Sigmoid colon (tissue), 7 donors: ENCODE measurements at regions of chr2 and their contacts with region 1.

Region 1: GRCh38 chr2:239401067-239401880 is 454 bp upstream of the HDAC4 start:
- DNase-seq: peak; percentile 100
- H3K4me3 ChIP-seq: peak overlapping the region; percentile 56 to 80 (median 68)
- H3K27ac ChIP-seq: peak overlapping the region; percentile 97 to 100 (median 98)
- H3K4me1 ChIP-seq: peaks cover 4 to 40% (median 36%) of the 10 kb centered on the region in 4 donors
- H3K27me3 ChIP-seq: no peaks in the 10 kb centered on the region
- CTCF ChIP-seq: no peak
- EP300 ChIP-seq: peak in 2 of 4 donors; percentile 48 to 65
- POLR2A ChIP-seq: peak; percentile 90 to 93

Region 2: DNA sequence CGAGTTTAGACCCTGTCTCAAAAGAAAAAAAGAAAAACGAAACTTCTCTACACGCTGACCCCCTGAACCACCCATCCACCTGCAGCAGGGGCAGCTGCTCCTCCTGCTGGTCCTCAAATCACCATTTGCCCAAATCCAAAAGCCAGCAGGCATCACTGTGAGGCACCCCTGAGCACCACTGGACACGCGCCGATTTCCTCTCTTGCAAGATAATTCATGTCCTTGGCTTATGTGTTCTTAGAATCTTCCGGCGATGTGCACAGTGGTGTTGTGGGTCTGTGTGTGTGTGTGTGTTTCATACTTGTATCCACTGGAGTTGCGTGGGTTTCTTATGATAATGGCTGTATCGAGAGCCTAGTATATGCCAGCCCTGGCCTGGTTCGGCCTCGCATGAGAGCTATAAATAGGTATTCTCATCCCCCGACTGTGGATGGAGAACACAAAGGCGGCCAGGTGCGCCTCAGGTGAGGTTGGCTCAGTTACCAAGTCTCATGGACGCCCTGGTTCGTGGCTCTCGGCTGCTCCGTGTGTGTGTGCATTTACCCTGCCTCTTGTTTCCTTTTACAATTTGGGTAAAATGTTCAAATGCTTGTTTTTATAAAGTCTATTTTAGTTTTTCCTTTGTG is 236.0 kb before region 1 on chr2:
- intact Hi-C with region 1: loop called (anchors 5 kb)
- DNase-seq: peak; percentile 62
- H3K4me3 ChIP-seq: no peak overlapping the region
- H3K27ac ChIP-seq: peak overlapping the region in 2 of 4 donors; percentile 9 to 73
- H3K4me1 ChIP-seq: peaks cover 0 to 46% (median 39%) of the 10 kb centered on the region in 4 donors
- H3K27me3 ChIP-seq: no peaks in the 10 kb centered on the region
- CTCF ChIP-seq: no peak
- EP300 ChIP-seq: no peak
- POLR2A ChIP-seq: no peak

Region 3: GRCh38 chr2:239308661-239309397 is 92.4 kb before region 1 on chr2:
- intact Hi-C with region 1: loop called (anchors 5 kb)
- DNase-seq: peak; percentile 90
- H3K4me3 ChIP-seq: peak overlapping the region; percentile 48 to 62 (median 54)
- H3K27ac ChIP-seq: peak overlapping the region; percentile 93 to 97 (median 96)
- H3K4me1 ChIP-seq: peaks cover 4 to 93% (median 88%) of the 10 kb centered on the region in 4 donors
- H3K27me3 ChIP-seq: no peaks in the 10 kb centered on the region
- CTCF ChIP-seq: no peak
- EP300 ChIP-seq: peak in 3 of 4 donors; percentile 62 to 78 (median 78)
- POLR2A ChIP-seq: peak; percentile 56 to 63

Region 4: GRCh38 chr2:239348563-239349447 is 52.5 kb before region 1 on chr2:
- intact Hi-C with region 1: loop called (anchors 2 kb)
- DNase-seq: peak; percentile 95
- H3K4me3 ChIP-seq: peak overlapping the region; percentile 31 to 55 (median 40)
- H3K27ac ChIP-seq: peak overlapping the region; percentile 81 to 97 (median 96)
- H3K4me1 ChIP-seq: peaks cover 0 to 72% (median 60%) of the 10 kb centered on the region in 4 donors
- H3K27me3 ChIP-seq: no peaks in the 10 kb centered on the region
- CTCF ChIP-seq: no peak
- EP300 ChIP-seq: peak; percentile 97 to 100 (median 99)
- POLR2A ChIP-seq: peak; percentile 49 to 50

Region 5: GRCh38 chr2:239882331-239882732 is 481.1 kb after region 1 on chr2:
- intact Hi-C with region 1: loop called (anchors 10 kb)
- DNase-seq: no peak
- H3K4me3 ChIP-seq: no peak overlapping the region
- H3K27ac ChIP-seq: peak overlapping the region in 1 of 4 donors; percentile 63
- H3K4me1 ChIP-seq: peaks cover 0 to 10% (median 3%) of the 10 kb centered on the region in 4 donors
- H3K27me3 ChIP-seq: no peaks in the 10 kb centered on the region
- CTCF ChIP-seq: peak; percentile 39 to 74 (median 60)
- EP300 ChIP-seq: no peak
- POLR2A ChIP-seq: no peak